A549 (cell line): ENCODE measurements at regions of chr17 and their contacts with region 1.

Region 1: GRCh38 chr17:78708510-78708973 is 73.5 kb downstream of the CYTH1 start:
- DNase-seq: peak; percentile 92 to 99
- ATAC-seq: peak; percentile 97 to 98
- H3K4me3 ChIP-seq: no peak overlapping the region
- H3K27ac ChIP-seq: peak overlapping the region; percentile 78 to 88
- H3K4me1 ChIP-seq: peaks cover 48% of the 10 kb centered on the region
- CTCF ChIP-seq: peak; percentile 99
- EP300 ChIP-seq: no peak; a peak in 1 of 5 replicates
- POLR2A ChIP-seq: no peak
- RAD21 ChIP-seq: peak; percentile 100

Region 2: GRCh38 chr17:78360371-78361224 is 347.9 kb before region 1 on chr17:
- CTCF ChIA-PET with region 1: interaction called, 18 read pairs
- POLR2A ChIA-PET with region 1: interaction called, 5 read pairs
- DNase-seq: peak; percentile 92 to 99
- ATAC-seq: peak; percentile 54 to 81
- H3K4me3 ChIP-seq: peak overlapping the region; percentile 86
- H3K27ac ChIP-seq: peak overlapping the region; percentile 93 to 96
- H3K4me1 ChIP-seq: peaks cover 35% of the 10 kb centered on the region
- CTCF ChIP-seq: peak; percentile 96
- EP300 ChIP-seq: peak in 1 of 2 experiments; percentile 3; a peak in 1 of 5 replicates
- POLR2A ChIP-seq: no peak
- RAD21 ChIP-seq: peak; percentile 90 to 96

Region 3: GRCh38 chr17:78506454-78507309 is 201.9 kb before region 1 on chr17:
- CTCF ChIA-PET with region 1: interaction called, 488 read pairs
- POLR2A ChIA-PET with region 1: no interaction called
- DNase-seq: no peak
- ATAC-seq: no peak
- H3K4me3 ChIP-seq: no peak overlapping the region
- H3K27ac ChIP-seq: peak overlapping the region; percentile 71 to 79; a peak in 4 of 6 replicates
- H3K4me1 ChIP-seq: peaks cover 16% of the 10 kb centered on the region
- CTCF ChIP-seq: no peak
- EP300 ChIP-seq: no peak
- POLR2A ChIP-seq: no peak
- RAD21 ChIP-seq: no peak

Region 4: GRCh38 chr17:78592991-78593329 is 115.6 kb before region 1 on chr17:
- CTCF ChIA-PET with region 1: interaction called, 35 read pairs
- POLR2A ChIA-PET with region 1: interaction called, 37 read pairs
- DNase-seq: peak in 1 of 2 experiments; percentile 42
- ATAC-seq: peak in 1 of 2 experiments; percentile 45; a peak in 3 of 6 replicates
- H3K4me3 ChIP-seq: peak overlapping the region; percentile 9; the same call in 1 of the 3 replicates
- H3K27ac ChIP-seq: peak overlapping the region; percentile 94 to 99
- H3K4me1 ChIP-seq: peaks cover 77% of the 10 kb centered on the region
- CTCF ChIP-seq: no peak
- EP300 ChIP-seq: no peak
- POLR2A ChIP-seq: no peak
- RAD21 ChIP-seq: no peak

Region 5: GRCh38 chr17:78645421-78646295 is 62.9 kb before region 1 on chr17:
- CTCF ChIA-PET with region 1: interaction called, 10 read pairs
- POLR2A ChIA-PET with region 1: no interaction called
- DNase-seq: peak; percentile 88 to 90
- ATAC-seq: peak; percentile 73 to 90
- H3K4me3 ChIP-seq: no peak overlapping the region
- H3K27ac ChIP-seq: peak overlapping the region; percentile 70 to 80
- H3K4me1 ChIP-seq: peaks cover 17% of the 10 kb centered on the region
- CTCF ChIP-seq: no peak
- EP300 ChIP-seq: no peak
- POLR2A ChIP-seq: no peak
- RAD21 ChIP-seq: no peak

Region 6: DNA sequence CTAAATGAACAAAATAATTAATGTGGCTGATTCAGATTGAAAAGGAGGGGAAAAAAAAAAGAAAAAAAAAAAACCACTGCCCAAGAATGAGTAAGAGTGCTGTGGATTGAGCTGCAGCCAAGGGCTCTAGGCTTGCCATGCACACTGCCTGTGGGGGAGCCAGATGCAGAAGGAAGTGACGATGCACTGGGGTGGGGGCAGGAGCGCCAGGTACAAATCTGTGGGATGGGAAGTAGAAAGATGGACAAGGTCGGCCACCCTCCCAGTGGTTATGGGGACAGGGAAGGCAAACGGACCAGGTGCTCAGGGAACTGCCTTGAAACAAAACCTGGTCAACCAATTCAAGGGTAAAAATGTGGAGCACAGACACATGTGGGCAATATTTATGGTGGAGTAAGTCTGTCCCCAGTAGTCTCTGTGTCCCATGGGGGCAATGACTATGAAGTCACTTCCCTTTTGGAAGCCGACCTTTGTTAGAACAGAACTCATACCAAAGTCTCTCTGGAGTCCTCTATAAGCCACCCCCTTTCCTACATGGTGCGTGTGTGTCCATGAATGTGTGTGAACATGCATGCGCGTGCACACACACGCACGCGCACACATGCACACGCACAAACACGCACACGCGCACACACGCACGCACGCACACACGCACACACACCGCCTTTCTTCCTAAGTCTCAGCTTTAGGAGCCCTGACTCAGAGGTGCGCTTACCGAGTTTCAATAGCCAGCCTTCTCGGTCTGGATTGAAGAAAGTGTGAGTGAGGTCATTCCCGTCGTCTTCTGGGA is 10.8 kb before region 1 on chr17:
- CTCF ChIA-PET with region 1: interaction called, 32 read pairs
- POLR2A ChIA-PET with region 1: no interaction called
- DNase-seq: no peak
- ATAC-seq: no peak
- H3K4me3 ChIP-seq: no peak overlapping the region
- H3K27ac ChIP-seq: peak overlapping the region in 1 of 2 experiments; percentile 30; a peak in 2 of 6 replicates
- H3K4me1 ChIP-seq: no peaks in the 10 kb centered on the region
- CTCF ChIP-seq: no peak
- EP300 ChIP-seq: no peak
- POLR2A ChIP-seq: no peak
- RAD21 ChIP-seq: no peak

Region 7: GRCh38 chr17:78763561-78763960 is 55.0 kb after region 1 on chr17:
- CTCF ChIA-PET with region 1: no interaction called
- POLR2A ChIA-PET with region 1: no interaction called
- DNase-seq: no peak
- ATAC-seq: no peak
- H3K4me3 ChIP-seq: no peak overlapping the region
- H3K27ac ChIP-seq: no peak overlapping the region
- H3K4me1 ChIP-seq: 0 out of 3 replicates have a peak, but pooled peaks cover 3% of the 10 kb centered on the region
- CTCF ChIP-seq: no peak
- EP300 ChIP-seq: no peak
- POLR2A ChIP-seq: no peak
- RAD21 ChIP-seq: no peak